ENCODE measurements at regions of chr18 and their contacts with region 1.

Region 1: GRCh38 chr18:26963292-26963691 is 97.8 kb upstream of the AQP4 start:
- DNase-seq: no peak
- ATAC-seq: peak in 1 of 2 donors; percentile 51
- H3K4me3 ChIP-seq: no peak overlapping the region
- H3K27ac ChIP-seq: no peak overlapping the region
- H3K4me1 ChIP-seq: no peaks in the 10 kb centered on the region
- H3K27me3 ChIP-seq: no peaks in the 10 kb centered on the region

Region 2: DNA sequence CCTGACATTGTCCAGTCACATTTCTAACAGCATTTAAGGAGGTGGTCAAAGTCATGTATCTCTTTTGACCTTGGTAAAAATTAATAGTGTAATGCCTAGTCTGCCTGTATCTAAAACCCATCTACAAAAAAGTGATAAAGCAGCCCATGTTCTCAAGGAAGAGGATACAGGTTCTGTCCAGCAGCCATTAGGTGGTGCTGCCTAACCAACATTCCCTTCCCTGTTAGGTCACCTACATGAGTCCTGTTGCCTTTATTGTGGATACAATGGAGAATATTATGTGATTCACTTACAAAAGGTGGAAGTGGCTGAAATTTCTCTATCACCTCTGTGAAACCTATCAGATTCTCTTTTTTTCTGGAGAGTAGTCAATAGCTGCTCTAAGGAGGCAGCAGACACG is 150.2 kb before region 1 on chr18:
- intact Hi-C with region 1: loop called in 3 of 4 experiments (anchors 5 to 10 kb)
- DNase-seq: peak in 2 of 3 donors; percentile 21 to 34
- ATAC-seq: peak in 1 of 2 donors; percentile 78
- H3K4me3 ChIP-seq: no peak overlapping the region
- H3K27ac ChIP-seq: no peak overlapping the region
- H3K4me1 ChIP-seq: no peaks in the 10 kb centered on the region
- H3K27me3 ChIP-seq: no peaks in the 10 kb centered on the region

Region 3: DNA sequence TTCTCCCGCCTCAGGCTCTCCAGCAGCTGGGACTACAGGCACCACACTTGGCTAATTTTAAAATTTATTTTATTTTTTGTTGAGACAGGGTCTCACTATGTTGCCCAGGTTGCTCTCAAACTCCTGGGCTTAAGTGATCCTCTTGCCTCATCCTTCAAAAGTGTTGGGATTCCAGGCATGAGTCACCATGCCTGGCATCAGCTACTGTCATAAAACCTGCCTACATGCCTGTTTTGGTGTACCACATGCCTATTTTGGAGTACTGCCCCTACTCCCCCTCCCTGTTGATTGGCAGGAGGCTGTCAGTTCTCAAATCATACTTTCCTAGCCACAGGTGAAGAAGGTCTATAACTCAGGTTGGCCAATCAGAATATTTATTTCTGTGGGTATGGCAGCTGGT is 157.8 kb after region 1 on chr18:
- intact Hi-C with region 1: no loop called
- DNase-seq: no peak
- ATAC-seq: no peak
- H3K4me3 ChIP-seq: no peak overlapping the region
- H3K27ac ChIP-seq: no peak overlapping the region
- H3K4me1 ChIP-seq: no peaks in the 10 kb centered on the region
- H3K27me3 ChIP-seq: no peaks in the 10 kb centered on the region

Measured in right cardiac atrium (tissue), 5 donors.